ENCODE measurements at regions of chr2 and their contacts with region 1.

Region 1: DNA sequence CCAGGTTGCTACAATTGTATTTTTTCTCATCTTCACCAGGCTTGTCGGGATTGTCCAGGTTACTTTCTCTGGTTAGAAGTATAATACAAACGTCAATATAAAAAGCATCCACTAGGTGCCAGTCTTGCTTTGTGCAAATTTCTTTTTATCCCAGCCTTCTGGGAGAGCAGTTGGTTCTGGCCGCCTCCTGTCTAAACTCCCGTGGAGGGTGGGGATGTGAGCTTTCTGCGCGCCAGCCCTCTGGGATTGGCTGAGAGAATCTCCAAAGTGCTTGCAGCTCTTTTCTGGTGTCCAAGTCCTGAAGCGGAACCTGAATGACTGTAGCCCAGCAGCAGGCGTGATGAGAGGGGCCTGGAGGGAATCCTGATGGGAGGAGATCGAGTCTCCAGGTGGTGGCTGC is 22.4 kb upstream of the TOGARAM2 start:
- DNase-seq: peak; percentile 57 to 71
- H3K4me3 ChIP-seq: no peak overlapping the region
- H3K27ac ChIP-seq: no peak overlapping the region
- H3K4me1 ChIP-seq: no peaks in the 10 kb centered on the region
- H3K27me3 ChIP-seq: no peaks in the 10 kb centered on the region
- CTCF ChIP-seq: peak; percentile 89

Region 2: GRCh38 chr2:29053670-29054400 is 95.1 kb after region 1 on chr2:
- CTCF ChIA-PET with region 1: no interaction called
- POLR2A ChIA-PET with region 1: no interaction called
- intact Hi-C with region 1: loop called (anchors 5 kb)
- DNase-seq: peak in 1 of 2 experiments; percentile 30
- H3K4me3 ChIP-seq: no peak overlapping the region
- H3K27ac ChIP-seq: peak overlapping the region; percentile 85
- H3K4me1 ChIP-seq: peaks cover 25% of the 10 kb centered on the region
- H3K27me3 ChIP-seq: no peaks in the 10 kb centered on the region
- CTCF ChIP-seq: peak; percentile 75

Region 3: GRCh38 chr2:29196792-29197788 is 238.4 kb after region 1 on chr2:
- CTCF ChIA-PET with region 1: no interaction called
- POLR2A ChIA-PET with region 1: no interaction called
- intact Hi-C with region 1: loop called (anchors 1 kb)
- DNase-seq: peak in 1 of 2 experiments; percentile 61
- H3K4me3 ChIP-seq: no peak overlapping the region
- H3K27ac ChIP-seq: no peak overlapping the region
- H3K4me1 ChIP-seq: no peaks in the 10 kb centered on the region
- H3K27me3 ChIP-seq: no peaks in the 10 kb centered on the region
- CTCF ChIP-seq: peak; percentile 91

Region 4: GRCh38 chr2:29841386-29842004 is 882.8 kb after region 1 on chr2:
- CTCF ChIA-PET with region 1: no interaction called
- POLR2A ChIA-PET with region 1: no interaction called
- intact Hi-C with region 1: loop called (anchors 5 kb)
- DNase-seq: peak in 1 of 2 experiments; percentile 13
- H3K4me3 ChIP-seq: no peak overlapping the region
- H3K27ac ChIP-seq: no peak overlapping the region
- H3K4me1 ChIP-seq: no peaks in the 10 kb centered on the region
- H3K27me3 ChIP-seq: peaks cover 21% of the 10 kb centered on the region; the same call in 1 of the 2 replicates
- CTCF ChIP-seq: peak; percentile 86

Region 5: GRCh38 chr2:30115141-30115980 is 1156.7 kb after region 1 on chr2:
- CTCF ChIA-PET with region 1: no interaction called
- POLR2A ChIA-PET with region 1: no interaction called
- intact Hi-C with region 1: loop called (anchors 5 kb)
- DNase-seq: peak; percentile 36 to 71
- H3K4me3 ChIP-seq: no peak overlapping the region
- H3K27ac ChIP-seq: no peak overlapping the region
- H3K4me1 ChIP-seq: peaks cover 9% of the 10 kb centered on the region; the same call in 1 of the 2 replicates
- H3K27me3 ChIP-seq: peaks cover 5% of the 10 kb centered on the region; the same call in 1 of the 2 replicates
- CTCF ChIP-seq: peak; percentile 97